CD4-positive, alpha-beta memory T cell (primary cell): ENCODE measurements at regions of chr14 and their contacts with region 1.

Region 1: DNA sequence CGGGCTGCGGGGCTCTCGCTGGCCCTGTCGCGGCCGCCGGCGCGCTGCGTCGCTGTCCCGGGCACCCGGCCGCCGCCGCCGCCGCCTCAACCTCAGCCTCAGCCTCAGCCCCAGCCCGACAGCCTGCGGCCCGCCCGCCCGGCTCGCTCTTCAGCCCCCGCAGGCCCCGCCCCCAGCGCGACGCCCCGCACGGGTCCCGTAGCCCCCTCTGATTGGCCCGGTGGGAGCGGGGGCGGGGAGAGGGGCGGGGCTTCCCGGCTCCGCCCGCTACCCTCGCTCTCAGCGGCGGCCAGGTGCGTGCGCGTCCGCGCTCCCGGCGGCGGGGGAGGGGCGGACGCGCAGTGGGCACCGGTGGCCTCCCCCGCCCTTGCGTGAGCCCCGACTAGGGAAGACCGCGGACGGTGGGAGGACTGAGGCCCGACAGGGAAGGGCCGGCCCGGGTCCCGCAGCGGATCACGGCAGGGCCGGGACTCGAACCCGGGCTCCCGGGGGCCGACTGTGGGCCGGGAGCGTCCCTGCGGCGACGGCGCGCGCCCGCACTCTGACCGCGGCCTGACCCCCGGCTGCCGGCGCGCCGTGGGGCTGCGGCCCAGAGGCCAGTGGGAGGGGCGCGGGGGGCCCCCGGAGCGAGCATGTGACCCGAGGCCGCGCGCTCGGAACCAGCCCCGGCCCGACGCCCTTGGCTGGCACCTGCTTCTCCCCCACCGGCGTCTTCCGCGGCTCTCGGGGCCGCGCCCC is at the start of gene PPP1R13B:
- DNase-seq: peak; percentile 90 to 93 (median 92)
- H3K4me3 ChIP-seq: peak within 1 kb of the TSS; percentile 1 to 55
- H3K4me3 Mint-ChIP-seq: peak within 1 kb of the TSS; percentile 86 to 96 (median 92)
- H3K27ac ChIP-seq: peak within 1 kb of the TSS; percentile 26
- H3K27ac Mint-ChIP-seq: peak within 1 kb of the TSS; percentile 43 to 93 (median 85)
- H3K4me1 ChIP-seq: peaks cover 12% of the 10 kb centered on the region
- H3K4me1 Mint-ChIP-seq: peaks cover 9 to 26% (median 16%) of the 10 kb centered on the region in 4 donors
- H3K27me3 ChIP-seq: no peaks in the 10 kb centered on the region
- H3K27me3 Mint-ChIP-seq: no peaks in the 10 kb centered on the region
- total RNA-seq, gene PPP1R13B: 23.3 to 30.5 TPM

Region 2: GRCh38 chr14:103715052-103716000 is 132.3 kb before region 1 on chr14 and contains the starts of genes XRCC3 and ZFYVE21:
- CTCF ChIA-PET with region 1: no interaction called
- POLR2A ChIA-PET with region 1: no interaction called
- intact Hi-C with region 1: loop called (anchors 2 kb)
- DNase-seq: peak; percentile 100
- H3K4me3 ChIP-seq: peak within 1 kb of the TSS; percentile 12 to 60
- H3K4me3 Mint-ChIP-seq: peak within 1 kb of the TSS; percentile 89 to 95 (median 93)
- H3K27ac ChIP-seq: peak within 1 kb of the TSS; percentile 49
- H3K27ac Mint-ChIP-seq: peak within 1 kb of the TSS; percentile 86 to 98 (median 93)
- H3K4me1 ChIP-seq: peaks cover 21% of the 10 kb centered on the region
- H3K4me1 Mint-ChIP-seq: peaks cover 17 to 72% (median 40%) of the 10 kb centered on the region in 4 donors
- H3K27me3 ChIP-seq: no peaks in the 10 kb centered on the region
- H3K27me3 Mint-ChIP-seq: no peaks in the 10 kb centered on the region
- total RNA-seq, gene XRCC3: 10.3 to 12.6 TPM
- total RNA-seq, gene ZFYVE21: 17.4 to 18.8 TPM

Region 3: DNA sequence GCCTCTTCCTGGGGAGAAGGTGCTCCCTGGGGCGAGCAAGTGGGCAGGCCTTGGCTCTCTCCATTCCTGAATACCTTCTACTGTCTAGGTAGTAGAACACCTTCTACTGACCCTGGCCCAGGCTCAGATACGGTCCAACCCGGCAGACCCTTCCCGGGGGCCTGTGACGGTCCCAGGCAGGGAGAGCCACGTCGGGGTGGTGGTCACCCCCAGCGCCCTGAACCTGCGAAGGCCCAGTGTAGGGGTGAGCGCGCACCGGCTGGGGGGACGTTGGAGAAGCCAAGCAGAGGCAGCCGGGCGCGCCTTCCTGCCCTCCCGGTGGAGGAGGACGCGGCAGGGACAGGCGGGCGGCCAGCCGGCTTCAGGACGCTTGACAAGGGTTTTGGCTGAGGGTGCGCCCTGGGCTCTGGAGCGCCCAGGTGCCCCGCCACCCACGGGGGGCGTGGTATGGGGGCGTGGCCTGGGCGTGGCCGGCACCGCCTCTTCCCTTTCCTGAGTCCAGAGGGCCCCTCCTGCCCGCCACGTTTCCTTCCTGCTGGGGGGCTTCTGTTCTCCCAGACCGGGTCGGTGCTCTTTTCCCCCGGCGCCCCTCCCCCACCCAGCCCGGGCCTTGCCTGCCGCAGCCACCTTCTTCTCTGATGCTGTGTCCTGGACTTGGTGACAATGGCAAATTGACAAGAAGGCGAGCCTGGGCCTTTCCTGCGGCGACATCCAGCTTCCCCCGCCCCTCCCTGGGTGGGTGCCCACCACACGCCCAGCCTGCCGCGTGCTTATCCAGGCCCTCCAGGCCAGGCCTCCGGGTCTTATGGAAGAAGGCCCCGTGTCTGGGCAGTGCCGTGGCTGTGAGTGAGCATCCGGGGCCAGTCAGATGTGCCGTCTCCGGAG is 24.2 kb after region 1 on chr14:
- CTCF ChIA-PET with region 1: no interaction called
- POLR2A ChIA-PET with region 1: no interaction called
- intact Hi-C with region 1: loop called (anchors 1 kb)
- DNase-seq: peak; percentile 59 to 70 (median 62)
- H3K4me3 ChIP-seq: peak overlapping the region; percentile 34 to 56
- H3K4me3 Mint-ChIP-seq: peak overlapping the region; percentile 81 to 88 (median 84)
- H3K27ac ChIP-seq: peak overlapping the region; percentile 56
- H3K27ac Mint-ChIP-seq: peak overlapping the region; percentile 30 to 90 (median 78)
- H3K4me1 ChIP-seq: peaks cover 12% of the 10 kb centered on the region
- H3K4me1 Mint-ChIP-seq: peaks cover 6 to 13% (median 10%) of the 10 kb centered on the region in 4 donors
- H3K27me3 ChIP-seq: no peaks in the 10 kb centered on the region
- H3K27me3 Mint-ChIP-seq: peaks cover 0 to 2% of the 10 kb centered on the region in 2 donors

Region 4: GRCh38 chr14:103882503-103883279 is 35.1 kb after region 1 on chr14:
- CTCF ChIA-PET with region 1: no interaction called
- POLR2A ChIA-PET with region 1: no interaction called
- intact Hi-C with region 1: no loop called
- DNase-seq: no peak
- H3K4me3 ChIP-seq: no peak overlapping the region
- H3K4me3 Mint-ChIP-seq: no peak overlapping the region
- H3K27ac ChIP-seq: no peak overlapping the region
- H3K27ac Mint-ChIP-seq: no peak overlapping the region
- H3K4me1 ChIP-seq: peaks cover 18% of the 10 kb centered on the region
- H3K4me1 Mint-ChIP-seq: peaks cover 3 to 29% (median 14%) of the 10 kb centered on the region in 4 donors
- H3K27me3 ChIP-seq: no peaks in the 10 kb centered on the region
- H3K27me3 Mint-ChIP-seq: peaks cover 0 to 2% of the 10 kb centered on the region in 2 donors